ENCODE measurements at regions of chr15 and their contacts with region 1.

Region 1: GRCh38 chr15:64460206-64460734 is at the start of gene ZNF609:
- DNase-seq: peak; percentile 96
- ATAC-seq: peak; percentile 73
- H3K4me3 Mint-ChIP-seq: peak within 1 kb of the TSS; percentile 92
- H3K27ac Mint-ChIP-seq: peak within 1 kb of the TSS; percentile 84
- H3K4me1 Mint-ChIP-seq: peaks cover 60% of the 10 kb centered on the region
- H3K27me3 Mint-ChIP-seq: no peaks in the 10 kb centered on the region
- total RNA-seq, gene ZNF609: 52.2 to 57.2 TPM

Region 2: DNA sequence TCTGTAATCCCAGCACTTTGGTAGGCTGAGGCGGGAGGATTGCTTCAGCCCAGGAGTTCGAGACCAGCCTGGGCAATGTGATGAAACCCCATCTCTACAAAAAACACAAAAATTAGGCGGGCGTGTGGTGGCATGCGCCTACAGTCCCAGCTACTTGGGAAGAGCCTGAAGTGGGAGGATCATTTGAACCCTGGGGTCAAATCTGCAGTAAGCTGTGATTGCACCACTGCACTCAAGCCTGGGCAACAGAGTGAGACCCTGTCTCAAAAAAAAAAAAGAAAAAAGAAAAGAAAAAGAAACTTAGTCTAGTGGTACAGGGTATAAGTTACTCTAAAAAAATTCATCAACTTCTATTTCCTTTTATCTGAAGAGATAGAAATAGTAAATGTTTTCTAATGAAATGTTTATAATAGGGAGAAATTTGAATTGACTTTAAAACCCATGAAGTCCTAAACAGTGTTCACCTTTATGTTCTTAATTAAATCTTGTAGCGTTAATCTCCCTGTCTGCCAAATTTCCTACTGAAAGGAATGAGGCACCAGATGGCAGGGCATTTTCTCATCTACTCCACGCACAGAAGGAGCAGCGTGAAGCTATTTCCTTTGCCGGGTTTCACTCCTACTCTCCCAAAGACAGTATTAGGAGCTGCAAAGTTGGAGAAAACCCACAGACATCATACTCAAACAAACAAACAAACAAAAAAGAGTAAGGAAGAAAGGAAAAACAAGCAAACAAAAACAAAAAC is 80.9 kb before region 1 on chr15:
- POLR2A ChIA-PET with region 1: no interaction called
- DNase-seq: no peak
- ATAC-seq: no peak
- H3K4me3 Mint-ChIP-seq: peak overlapping the region; percentile 92
- H3K27ac Mint-ChIP-seq: peak overlapping the region; percentile 77
- H3K4me1 Mint-ChIP-seq: peaks cover 16% of the 10 kb centered on the region
- H3K27me3 Mint-ChIP-seq: no peaks in the 10 kb centered on the region

Region 3: GRCh38 chr15:64430000-64430735 is 30.1 kb before region 1 on chr15:
- POLR2A ChIA-PET with region 1: interaction called, 19 read pairs
- DNase-seq: no peak
- ATAC-seq: peak; percentile 76
- H3K4me3 Mint-ChIP-seq: peak overlapping the region; percentile 70
- H3K27ac Mint-ChIP-seq: peak overlapping the region; percentile 84
- H3K4me1 Mint-ChIP-seq: peaks cover 29% of the 10 kb centered on the region
- H3K27me3 Mint-ChIP-seq: no peaks in the 10 kb centered on the region

Region 4: DNA sequence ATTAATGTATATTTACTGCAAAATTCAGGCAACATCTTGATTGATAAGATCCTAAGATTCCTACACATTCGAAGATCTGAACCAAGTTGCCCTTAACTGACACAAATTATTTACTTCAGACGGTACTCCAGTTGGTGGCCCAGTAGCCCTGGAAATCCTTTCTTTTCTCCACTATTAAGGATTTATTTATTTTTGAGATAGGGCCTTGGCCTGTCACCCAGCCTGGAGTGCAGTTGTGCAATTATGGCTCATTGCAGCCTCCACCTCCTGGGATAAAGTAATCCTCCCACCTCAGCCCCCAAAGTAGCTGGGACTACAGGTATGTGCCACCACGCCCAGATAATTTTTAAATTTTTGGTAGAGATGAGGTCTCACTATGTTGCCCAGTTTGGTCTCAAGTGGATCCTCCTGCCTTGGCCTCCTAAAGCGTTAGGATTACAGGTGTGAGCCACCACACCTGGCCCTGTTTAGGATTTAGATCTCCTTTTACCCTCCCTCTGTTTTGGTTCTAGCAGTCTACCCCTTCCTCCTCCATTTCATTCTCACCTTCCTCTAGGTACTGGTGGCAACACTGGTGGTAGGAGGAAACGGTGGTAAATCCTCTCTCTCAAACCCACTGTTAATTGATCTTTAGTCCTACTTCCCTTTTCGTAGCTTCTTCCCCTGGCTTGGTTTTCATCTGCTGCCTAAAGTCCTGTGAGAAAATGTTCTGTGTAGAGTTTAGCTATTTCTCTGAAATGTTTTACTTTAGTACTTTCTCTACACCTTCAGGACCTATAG is 12.5 kb before region 1 on chr15:
- POLR2A ChIA-PET with region 1: interaction called, 13 read pairs
- DNase-seq: no peak
- ATAC-seq: no peak
- H3K4me3 Mint-ChIP-seq: peak overlapping the region; percentile 50
- H3K27ac Mint-ChIP-seq: peak overlapping the region; percentile 81
- H3K4me1 Mint-ChIP-seq: peaks cover 44% of the 10 kb centered on the region
- H3K27me3 Mint-ChIP-seq: no peaks in the 10 kb centered on the region